ENCODE measurements at regions of chr4 and their contacts with region 1.

Region 1: GRCh38 chr4:74189331-74190043 is 31.6 kb downstream of the MTHFD2L start:
- DNase-seq: no peak
- ATAC-seq: peak in 1 of 4 donors; percentile 51
- H3K4me3 ChIP-seq: no peak overlapping the region
- H3K27ac ChIP-seq: no peak overlapping the region
- H3K4me1 ChIP-seq: no peaks in the 10 kb centered on the region
- H3K27me3 ChIP-seq: no peaks in the 10 kb centered on the region
- CTCF ChIP-seq: peak; percentile 67

Region 2: DNA sequence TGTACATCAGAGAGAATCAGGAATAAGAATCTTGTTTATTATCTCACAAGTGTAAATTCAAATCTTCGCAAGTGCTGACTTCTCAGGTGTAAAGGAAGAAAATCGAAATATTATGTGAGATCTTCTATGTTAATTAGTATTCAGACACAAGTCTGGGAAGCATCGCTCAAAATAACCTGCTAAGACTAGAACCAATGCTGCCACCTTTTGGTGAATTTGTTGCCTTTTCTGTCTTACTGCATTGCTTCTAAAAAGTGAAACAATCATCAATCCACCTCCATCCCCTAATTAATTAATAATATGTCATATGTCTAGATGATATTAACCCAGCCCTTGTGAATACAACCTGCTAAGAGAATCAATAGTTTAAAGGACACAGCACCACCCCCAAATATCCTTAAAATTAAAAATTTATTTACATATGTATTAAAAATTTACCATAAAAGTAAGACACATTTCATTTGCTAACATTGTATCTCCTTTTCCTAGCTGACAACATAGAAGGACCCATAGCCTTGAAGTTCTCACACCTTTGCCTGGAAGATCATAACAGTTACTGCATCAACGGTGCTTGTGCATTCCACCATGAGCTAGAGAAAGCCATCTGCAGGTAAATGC is 122.3 kb after region 1 on chr4:
- intact Hi-C with region 1: loop called (anchors 5 to 10 kb)
- DNase-seq: no peak
- ATAC-seq: no peak
- H3K4me3 ChIP-seq: no peak overlapping the region
- H3K27ac ChIP-seq: no peak overlapping the region
- H3K4me1 ChIP-seq: no peaks in the 10 kb centered on the region
- H3K27me3 ChIP-seq: no peaks in the 10 kb centered on the region
- CTCF ChIP-seq: peak; percentile 52

Region 3: DNA sequence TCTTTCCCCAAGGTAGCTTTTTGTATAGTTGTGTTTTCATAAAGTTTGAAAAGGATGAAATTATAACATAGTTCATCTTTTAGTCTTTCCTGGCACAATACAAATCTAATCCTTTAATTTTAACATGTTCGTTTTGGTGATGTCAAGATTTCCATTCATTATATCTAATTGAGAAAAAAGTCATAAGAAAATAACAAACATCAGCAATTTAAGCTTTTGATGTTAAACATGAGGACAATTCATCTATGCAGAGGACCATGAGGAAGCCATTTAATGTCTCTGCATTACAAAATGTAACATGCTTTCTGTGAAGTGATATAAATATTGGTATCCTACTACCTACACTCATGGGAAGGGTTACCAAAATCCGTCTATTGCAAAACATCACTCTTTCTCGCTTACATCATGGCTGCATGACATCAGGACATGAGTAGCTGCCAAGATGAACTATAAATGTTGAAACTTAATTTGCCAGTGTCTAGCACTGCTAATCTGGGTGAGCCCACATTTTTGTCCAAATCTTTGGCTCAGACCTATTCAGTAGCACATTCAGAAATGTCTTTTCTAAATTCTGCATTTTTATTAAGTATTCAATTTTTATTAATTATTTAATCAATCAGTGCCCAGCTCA is 128.2 kb after region 1 on chr4:
- intact Hi-C with region 1: loop called (anchors 5 to 10 kb)
- DNase-seq: no peak
- ATAC-seq: no peak
- H3K4me3 ChIP-seq: no peak overlapping the region
- H3K27ac ChIP-seq: no peak overlapping the region
- H3K4me1 ChIP-seq: no peaks in the 10 kb centered on the region
- H3K27me3 ChIP-seq: no peaks in the 10 kb centered on the region
- CTCF ChIP-seq: no peak

Region 4: DNA sequence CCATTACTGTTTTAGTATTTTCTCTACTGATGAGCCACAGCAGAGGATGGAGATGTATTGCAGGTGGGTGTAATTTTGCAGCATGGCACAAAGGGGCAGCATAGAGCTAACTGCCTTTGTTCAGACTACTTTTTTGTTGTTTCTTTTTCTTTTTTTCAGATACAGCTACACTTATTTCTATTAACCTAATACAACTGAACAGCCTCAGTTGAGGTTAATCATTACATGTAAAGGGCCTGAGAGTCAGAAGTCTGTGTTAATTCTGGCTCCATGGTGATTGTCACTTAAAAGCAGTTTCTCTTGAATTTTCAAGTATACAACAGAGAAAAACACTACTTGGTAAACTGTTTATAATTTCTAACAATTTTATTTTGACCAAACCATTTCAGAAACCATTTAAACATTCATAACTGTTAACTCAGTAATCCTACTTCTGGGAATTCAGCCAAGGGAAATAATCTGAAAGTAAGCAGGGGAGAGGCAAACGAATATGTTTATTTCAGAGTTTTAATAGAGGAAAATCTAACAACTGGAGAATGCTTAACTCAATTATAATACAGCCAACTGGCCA is 1726.7 kb after region 1 on chr4:
- intact Hi-C with region 1: loop called in 1 of 2 experiments (anchors 5 kb)
- DNase-seq: no peak
- ATAC-seq: peak in 2 of 4 donors; percentile 46 to 73
- H3K4me3 ChIP-seq: no peak overlapping the region
- H3K27ac ChIP-seq: no peak overlapping the region
- H3K4me1 ChIP-seq: no peaks in the 10 kb centered on the region
- H3K27me3 ChIP-seq: no peaks in the 10 kb centered on the region
- CTCF ChIP-seq: peak; percentile 74

Measured in psoas muscle (tissue), 8 donors.